ENCODE measurements at regions of chr19 and their contacts with region 1.

Region 1: GRCh38 chr19:55339048-55339888 is at the start of gene KMT5C:
- DNase-seq: peak; percentile 100
- H3K4me3 ChIP-seq: peak within 1 kb of the TSS; percentile 55 to 96 (median 78)
- H3K27ac ChIP-seq: peak within 1 kb of the TSS; percentile 92 to 97 (median 94)
- H3K4me1 ChIP-seq: peaks cover 0 to 29% (median 23%) of the 10 kb centered on the region in 4 donors
- H3K27me3 ChIP-seq: peaks cover 0 to 8% (median 0%) of the 10 kb centered on the region in 3 donors
- CTCF ChIP-seq: peak in 3 of 4 experiments; percentile 39 to 63 (median 40)
- EP300 ChIP-seq: no peak
- POLR2A ChIP-seq: peak; percentile 11 to 12
- total RNA-seq, gene KMT5C: 7.5 to 12.7 (median 9.6) TPM

Region 2: GRCh38 chr19:54740134-54740497 is 599.2 kb before region 1 on chr19:
- intact Hi-C with region 1: no loop called
- DNase-seq: no peak
- H3K4me3 ChIP-seq: no peak overlapping the region
- H3K27ac ChIP-seq: no peak overlapping the region
- H3K4me1 ChIP-seq: no peaks in the 10 kb centered on the region
- H3K27me3 ChIP-seq: no peaks in the 10 kb centered on the region
- CTCF ChIP-seq: no peak
- EP300 ChIP-seq: no peak
- POLR2A ChIP-seq: no peak

Region 3: DNA sequence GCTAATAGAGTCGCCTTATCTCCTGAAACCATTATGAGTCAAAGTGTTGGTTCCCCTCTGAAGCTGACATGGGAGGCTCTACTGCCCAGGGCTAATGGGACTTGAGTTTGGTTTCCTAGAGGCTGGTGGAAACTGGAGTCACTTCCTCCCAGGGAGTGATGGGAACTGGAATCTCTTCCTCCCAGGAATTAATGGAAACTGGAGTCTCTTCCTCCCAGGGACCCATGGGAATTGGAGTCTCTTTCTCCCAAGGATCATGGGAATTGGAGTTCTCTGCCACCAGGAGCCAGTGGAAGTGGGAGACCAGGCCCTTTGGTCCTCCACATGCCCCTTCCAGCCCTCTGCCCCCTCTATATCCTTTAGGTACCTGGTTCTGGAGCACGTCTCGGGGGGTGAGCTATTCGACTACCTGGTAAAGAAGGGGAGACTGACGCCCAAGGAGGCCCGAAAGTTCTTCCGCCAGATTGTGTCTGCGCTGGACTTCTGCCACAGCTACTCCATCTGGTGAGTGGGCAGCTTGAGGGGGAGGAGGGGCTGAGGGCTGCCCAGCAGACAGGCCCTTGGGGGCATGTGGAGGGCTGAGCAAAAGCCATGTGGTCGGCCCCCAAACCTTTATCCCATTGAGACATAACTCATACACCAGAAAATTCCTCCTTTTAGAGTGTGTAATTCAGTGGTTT is 50.0 kb before region 1 on chr19:
- intact Hi-C with region 1: loop called (anchors 5 kb)
- DNase-seq: no peak
- H3K4me3 ChIP-seq: no peak overlapping the region
- H3K27ac ChIP-seq: no peak overlapping the region
- H3K4me1 ChIP-seq: peaks cover 0 to 15% (median 12%) of the 10 kb centered on the region in 4 donors
- H3K27me3 ChIP-seq: no peaks in the 10 kb centered on the region
- CTCF ChIP-seq: no peak
- EP300 ChIP-seq: no peak
- POLR2A ChIP-seq: no peak

Region 4: DNA sequence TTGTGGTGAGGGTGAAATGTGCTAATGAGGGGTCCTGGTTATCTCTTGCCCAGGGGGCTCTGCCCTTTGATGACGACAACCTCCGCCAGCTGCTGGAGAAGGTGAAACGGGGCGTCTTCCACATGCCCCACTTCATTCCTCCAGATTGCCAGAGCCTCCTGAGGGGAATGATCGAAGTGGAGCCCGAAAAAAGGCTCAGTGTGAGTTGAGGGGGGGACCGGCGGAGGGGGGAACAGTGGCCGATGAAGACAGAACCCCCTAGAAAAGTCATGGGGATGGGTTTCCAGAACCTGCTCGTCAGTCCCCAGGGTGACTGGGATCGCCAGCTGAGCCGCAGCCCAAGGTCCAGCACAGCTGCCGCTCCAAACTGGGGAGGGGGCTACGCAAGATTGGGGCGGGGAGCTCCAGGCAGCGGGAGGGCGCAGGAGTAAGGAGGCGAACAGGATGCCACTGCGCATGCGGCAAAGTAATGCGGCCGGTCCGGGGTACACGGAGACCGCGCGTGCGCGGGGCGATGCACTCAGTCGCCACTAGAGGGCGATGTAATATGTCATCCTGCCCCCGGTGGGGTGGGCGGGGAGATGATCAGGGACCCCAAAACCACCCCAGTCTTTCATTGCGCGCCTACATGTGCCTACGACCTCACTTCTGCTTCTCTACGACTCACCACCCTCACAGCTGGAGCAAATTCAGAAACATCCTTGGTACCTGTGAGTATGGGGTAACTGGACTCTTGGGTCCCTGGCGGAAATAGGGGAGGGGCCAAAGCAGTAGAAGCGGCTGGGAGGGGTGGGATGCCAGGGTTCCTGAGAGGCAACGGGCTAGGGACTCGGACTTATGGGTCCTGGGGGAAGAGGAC is 37.6 kb before region 1 on chr19:
- intact Hi-C with region 1: loop called (anchors 5 kb)
- DNase-seq: peak; percentile 93
- H3K4me3 ChIP-seq: peak overlapping the region in 3 of 4 donors; percentile 30 to 44 (median 38)
- H3K27ac ChIP-seq: peak overlapping the region in 1 of 4 donors; percentile 42
- H3K4me1 ChIP-seq: peaks cover 0 to 13% (median 10%) of the 10 kb centered on the region in 4 donors
- H3K27me3 ChIP-seq: no peaks in the 10 kb centered on the region
- CTCF ChIP-seq: peak; percentile 91 to 100 (median 95)
- EP300 ChIP-seq: no peak
- POLR2A ChIP-seq: no peak

Measured in sigmoid colon (tissue), 7 donors.